ENCODE measurements at regions of chr6 and their contacts with region 1.

Region 1: DNA sequence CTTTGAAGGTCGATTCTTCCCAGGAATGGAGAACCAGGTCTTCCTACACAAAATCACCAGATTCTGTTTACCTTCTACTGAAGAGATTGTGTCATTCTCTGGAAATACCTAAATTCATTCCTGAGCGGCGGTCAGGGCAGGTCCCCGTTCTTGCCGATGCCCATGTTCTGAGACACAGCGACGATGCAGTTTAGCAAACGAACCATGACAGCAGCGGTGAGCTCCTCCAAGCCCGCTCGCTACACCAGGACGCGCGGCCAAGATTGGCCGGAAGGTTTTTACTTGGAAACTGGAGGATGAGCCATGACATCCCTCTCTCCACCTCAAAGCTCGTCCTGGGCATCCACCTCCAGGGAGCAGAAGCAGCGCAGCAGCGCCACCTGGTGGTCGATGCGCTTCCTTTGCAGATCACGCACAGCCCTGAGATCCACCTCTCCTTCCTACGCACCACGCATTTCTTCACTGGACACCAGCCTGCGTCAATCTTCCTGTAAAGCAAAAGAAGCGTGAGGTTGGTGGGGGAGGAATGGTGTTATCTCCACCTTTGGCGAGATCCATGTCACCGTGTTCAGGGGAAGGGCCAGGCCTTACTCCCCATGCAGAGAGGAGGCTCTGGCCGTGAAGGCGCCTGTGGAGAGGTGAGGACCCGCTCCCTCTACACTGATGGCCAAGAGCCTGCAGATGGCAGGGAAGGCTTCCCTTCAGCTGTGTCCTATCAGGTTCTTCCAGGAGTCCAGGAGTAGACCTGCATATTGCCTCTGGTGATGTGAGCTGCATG is 9.9 kb upstream of the HLA-B start:
- DNase-seq: peak; percentile 88
- ATAC-seq: peak; percentile 96
- H3K4me3 Mint-ChIP-seq: peak overlapping the region; percentile 77
- H3K27ac Mint-ChIP-seq: no peak overlapping the region
- H3K4me1 Mint-ChIP-seq: peaks cover 17% of the 10 kb centered on the region
- H3K27me3 Mint-ChIP-seq: peaks cover 18% of the 10 kb centered on the region
- CTCF ChIP-seq: peak; percentile 97

Region 2: GRCh38 chr6:30672445-30673253 is 694.2 kb before region 1 on chr6 and contains the start of gene DHX16:
- CTCF ChIA-PET with region 1: no interaction called
- POLR2A ChIA-PET with region 1: no interaction called
- intact Hi-C with region 1: no loop called
- DNase-seq: peak; percentile 95
- ATAC-seq: peak; percentile 83
- H3K4me3 Mint-ChIP-seq: peak within 1 kb of the TSS; percentile 74
- H3K27ac Mint-ChIP-seq: peak within 1 kb of the TSS; percentile 85
- H3K4me1 Mint-ChIP-seq: peaks cover 26% of the 10 kb centered on the region
- H3K27me3 Mint-ChIP-seq: no peaks in the 10 kb centered on the region
- CTCF ChIP-seq: peak; percentile 70
- total RNA-seq, gene DHX16: 31.1 to 31.3 TPM

Region 3: DNA sequence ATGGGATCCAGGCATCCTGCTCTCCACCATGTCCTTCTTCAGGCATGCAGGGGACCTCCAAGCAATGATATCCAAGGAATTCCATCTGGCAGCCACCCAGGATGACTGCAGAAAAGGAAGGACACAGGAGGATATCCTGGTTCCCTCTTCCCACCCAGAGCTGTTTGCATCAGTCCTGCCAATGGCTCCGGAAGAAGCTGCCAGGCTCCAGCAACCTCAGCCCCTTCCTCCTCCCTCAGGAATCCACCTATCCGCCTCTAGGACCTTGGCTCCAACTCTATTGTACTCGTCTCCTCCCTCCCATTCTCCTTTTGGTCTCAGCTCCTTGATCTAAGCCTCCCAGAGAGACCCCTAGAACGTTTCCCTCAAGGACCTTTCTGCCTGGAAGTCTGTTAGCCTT is 227.3 kb before region 1 on chr6:
- CTCF ChIA-PET with region 1: interaction called, 23 read pairs
- POLR2A ChIA-PET with region 1: no interaction called
- intact Hi-C with region 1: loop called (anchors 5 kb)
- DNase-seq: no peak
- ATAC-seq: no peak
- H3K4me3 Mint-ChIP-seq: no peak overlapping the region
- H3K27ac Mint-ChIP-seq: no peak overlapping the region
- H3K4me1 Mint-ChIP-seq: peaks cover 4% of the 10 kb centered on the region
- H3K27me3 Mint-ChIP-seq: no peaks in the 10 kb centered on the region
- CTCF ChIP-seq: no peak

Region 4: GRCh38 chr6:31197559-31198305 is 169.2 kb before region 1 on chr6:
- CTCF ChIA-PET with region 1: interaction called, 38 read pairs
- POLR2A ChIA-PET with region 1: interaction called, 15 read pairs
- intact Hi-C with region 1: loop called (anchors 2 kb)
- DNase-seq: peak; percentile 99
- ATAC-seq: peak; percentile 81
- H3K4me3 Mint-ChIP-seq: peak overlapping the region; percentile 80
- H3K27ac Mint-ChIP-seq: peak overlapping the region; percentile 96
- H3K4me1 Mint-ChIP-seq: peaks cover 49% of the 10 kb centered on the region
- H3K27me3 Mint-ChIP-seq: no peaks in the 10 kb centered on the region
- CTCF ChIP-seq: no peak

Region 5: DNA sequence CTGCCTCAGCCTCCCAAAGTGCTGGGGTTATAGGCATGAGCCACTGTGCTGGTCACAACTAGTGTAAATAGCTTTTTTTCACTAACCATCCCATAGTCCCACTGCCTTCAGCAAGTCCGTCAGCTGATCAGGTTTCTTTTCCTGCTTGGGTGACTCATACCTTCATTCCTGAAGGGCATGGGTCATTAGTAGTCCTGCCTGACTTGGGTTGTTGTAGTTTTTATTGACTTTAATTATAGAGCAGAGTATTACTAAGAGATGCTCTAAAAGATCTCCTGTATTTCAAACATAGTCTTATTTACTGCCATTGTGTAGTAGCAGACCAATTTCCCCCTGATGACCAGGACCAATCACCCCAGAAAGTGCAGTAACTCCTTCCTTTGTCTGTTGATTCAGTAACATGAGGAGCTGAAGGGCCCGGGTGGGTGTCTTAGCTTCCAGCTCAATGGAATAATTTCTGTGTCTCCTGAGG is 120.8 kb before region 1 on chr6:
- CTCF ChIA-PET with region 1: interaction called, 11 read pairs
- POLR2A ChIA-PET with region 1: no interaction called
- intact Hi-C with region 1: no loop called
- DNase-seq: no peak
- ATAC-seq: no peak
- H3K4me3 Mint-ChIP-seq: no peak overlapping the region
- H3K27ac Mint-ChIP-seq: no peak overlapping the region
- H3K4me1 Mint-ChIP-seq: peaks cover 14% of the 10 kb centered on the region
- H3K27me3 Mint-ChIP-seq: no peaks in the 10 kb centered on the region
- CTCF ChIP-seq: no peak